GM10248 (cell line): ENCODE measurements at regions of chr21 and their contacts with region 1.

Region 1: GRCh38 chr21:29372063-29372802 is 73.5 kb downstream of the BACH1 start:
- DNase-seq: peak; percentile 68
- CTCF ChIP-seq: peak; percentile 57

Region 2: GRCh38 chr21:28953247-28953646 is 419.0 kb before region 1 on chr21:
- CTCF ChIA-PET with region 1: no interaction called
- POLR2A ChIA-PET with region 1: no interaction called
- DNase-seq: peak; percentile 26
- CTCF ChIP-seq: no peak

Region 3: GRCh38 chr21:29085106-29085752 is 287.0 kb before region 1 on chr21:
- CTCF ChIA-PET with region 1: interaction called, 28 read pairs
- POLR2A ChIA-PET with region 1: no interaction called
- DNase-seq: no peak
- CTCF ChIP-seq: no peak

Region 4: DNA sequence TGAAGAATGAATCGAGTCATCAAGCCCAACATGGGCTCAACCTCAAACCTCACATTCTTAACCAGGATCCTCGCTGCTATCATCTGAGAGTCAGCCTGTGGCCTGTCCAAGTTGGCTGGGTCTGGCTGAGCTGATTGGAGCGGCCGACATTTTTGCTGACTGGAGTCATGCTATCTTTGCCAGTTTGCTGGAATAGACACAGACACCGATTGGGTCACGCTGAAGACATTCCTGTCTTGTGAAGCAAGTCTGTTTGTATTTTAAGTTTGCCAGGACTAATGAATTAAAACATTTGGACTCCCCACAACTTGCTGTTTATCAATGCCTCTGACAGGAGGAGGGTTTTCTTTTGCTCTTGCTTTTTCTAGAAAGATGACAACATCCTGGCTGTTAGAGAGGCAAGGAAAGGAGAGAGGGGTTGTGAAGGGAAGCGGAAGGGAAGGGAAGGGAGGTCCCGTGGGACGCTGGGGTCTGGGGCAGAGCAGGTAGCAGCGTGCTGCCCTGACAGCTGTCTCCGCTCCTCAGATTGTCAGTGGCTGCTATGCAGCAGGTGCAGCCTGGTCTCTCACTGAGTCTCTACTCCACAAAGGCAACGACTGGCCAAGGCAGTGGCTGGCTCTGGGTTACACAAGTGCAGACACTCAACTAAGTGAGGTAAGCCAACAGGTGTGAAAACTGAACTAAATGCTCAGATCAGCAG is 241.8 kb before region 1 on chr21 and contains the start of gene MAP3K7CL:
- CTCF ChIA-PET with region 1: no interaction called
- POLR2A ChIA-PET with region 1: no interaction called
- DNase-seq: no peak
- CTCF ChIP-seq: no peak

Region 5: DNA sequence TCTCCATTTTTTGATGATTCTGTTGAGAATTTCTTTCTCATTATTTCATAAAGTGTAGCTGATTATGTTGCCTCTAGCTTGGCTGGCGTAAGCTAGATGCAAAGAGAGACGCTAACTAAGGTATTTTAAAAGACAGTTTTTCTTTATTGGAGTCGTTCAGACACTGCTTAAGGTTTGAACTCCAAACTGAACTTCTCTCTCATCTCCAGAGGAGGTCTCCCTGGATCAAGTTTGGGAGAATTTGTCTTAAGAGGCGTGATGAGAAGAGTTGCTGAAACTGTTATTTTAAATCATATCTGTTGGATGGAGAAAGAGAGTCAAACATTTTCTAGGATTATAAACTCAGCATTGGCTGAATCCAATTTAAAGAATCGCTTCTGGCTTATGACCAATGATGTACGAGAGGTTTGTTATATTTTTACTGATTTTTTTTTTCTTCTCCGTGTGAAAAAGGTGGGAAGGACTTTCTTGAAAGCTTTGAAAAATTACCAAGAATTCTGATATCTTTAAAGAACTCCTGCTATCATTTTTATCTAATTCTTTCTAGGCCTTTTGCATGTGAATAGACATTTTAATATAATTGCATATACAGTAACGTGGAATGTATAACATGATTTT is 207.8 kb before region 1 on chr21:
- CTCF ChIA-PET with region 1: interaction called, 10 read pairs
- POLR2A ChIA-PET with region 1: no interaction called
- DNase-seq: peak; percentile 30
- CTCF ChIP-seq: peak; percentile 27

Region 6: DNA sequence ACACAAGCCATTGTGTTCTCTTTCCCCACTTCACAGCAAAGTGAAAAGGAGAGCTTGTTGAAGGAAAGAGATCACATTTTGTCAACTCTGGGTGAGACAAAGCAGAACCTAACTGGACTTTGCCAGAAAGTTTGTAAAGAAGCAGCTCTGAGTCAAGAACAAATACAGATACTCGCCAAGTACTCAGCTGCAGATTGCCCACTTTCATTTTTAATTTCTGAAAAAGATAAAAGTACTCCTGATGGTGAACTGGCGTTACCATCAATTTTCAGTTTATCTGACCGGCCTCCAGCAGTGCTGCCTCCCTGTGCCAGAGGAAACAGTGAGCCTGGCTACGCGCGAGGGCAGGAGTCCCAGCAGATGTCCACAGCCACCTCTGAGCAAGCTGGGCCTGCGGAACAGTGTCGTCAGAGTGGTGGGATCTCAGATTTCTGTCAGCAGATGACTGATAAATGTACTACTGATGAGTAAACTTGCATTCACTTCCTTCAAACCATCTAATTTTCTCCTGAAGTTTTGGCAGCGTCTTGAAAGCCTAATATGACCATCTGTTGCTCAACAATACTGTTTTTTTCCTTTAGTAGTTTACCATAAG is 29.8 kb before region 1 on chr21:
- CTCF ChIA-PET with region 1: interaction called, 10 read pairs
- POLR2A ChIA-PET with region 1: no interaction called
- DNase-seq: peak; percentile 50
- CTCF ChIP-seq: no peak

Region 7: DNA sequence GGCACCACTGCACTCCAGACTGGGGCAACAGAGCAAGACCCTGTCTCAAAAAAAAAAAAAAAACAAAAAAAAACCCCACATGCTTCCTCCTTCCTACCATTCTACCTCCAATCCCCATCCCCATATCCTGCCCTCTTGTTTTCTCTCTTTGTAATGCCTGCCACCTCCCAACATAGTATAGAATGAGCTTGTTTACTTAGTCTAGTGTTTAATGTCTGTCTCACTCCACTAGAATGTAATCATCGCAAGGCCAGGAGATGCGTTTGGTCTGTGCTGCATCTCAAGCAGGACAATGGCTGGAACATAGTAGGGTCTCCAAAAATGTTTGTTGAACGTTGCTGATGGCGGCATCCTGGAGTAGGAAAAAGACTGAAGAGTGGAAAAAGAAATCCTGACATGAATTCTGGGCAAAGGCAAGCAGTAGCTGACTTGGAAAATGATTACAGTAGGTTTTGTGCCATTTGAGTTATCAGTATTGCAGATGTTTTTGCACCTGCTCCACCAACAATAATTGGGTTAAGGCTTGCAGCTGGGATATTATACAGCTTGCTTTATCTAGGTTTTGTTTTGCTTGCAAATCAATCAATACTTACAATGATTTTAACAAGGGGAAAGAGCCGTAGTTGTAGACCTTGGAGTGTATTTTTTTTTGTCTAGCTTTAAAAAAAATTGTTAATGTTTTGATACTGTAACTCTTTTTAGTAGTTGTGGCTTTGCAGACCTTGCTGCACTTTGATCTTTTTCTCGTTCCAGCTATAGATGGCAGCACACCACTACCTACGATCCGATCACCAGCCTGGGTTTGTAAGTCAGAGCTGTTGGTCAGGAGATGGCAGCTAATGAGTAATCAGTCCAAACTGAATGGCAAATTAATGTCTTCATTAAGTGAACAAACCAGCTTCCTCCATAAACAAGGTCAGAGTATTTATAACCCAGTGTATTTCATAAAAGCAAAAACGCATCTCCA is 11.2 kb before region 1 on chr21:
- CTCF ChIA-PET with region 1: interaction called, 39 read pairs
- POLR2A ChIA-PET with region 1: no interaction called
- DNase-seq: no peak
- CTCF ChIP-seq: no peak